Upper lobe of right lung (tissue), 1 donor: ENCODE measurements at regions of chr3 and their contacts with region 1.

Region 1: GRCh38 chr3:52001443-52001974 is 5.8 kb upstream of the RPL29 start:
- DNase-seq: peak; percentile 86
- ATAC-seq: peak; percentile 81
- H3K4me3 ChIP-seq: no peak overlapping the region
- H3K27ac ChIP-seq: no peak overlapping the region
- H3K4me1 ChIP-seq: peaks cover 14% of the 10 kb centered on the region
- H3K27me3 ChIP-seq: no peaks in the 10 kb centered on the region
- CTCF ChIP-seq: peak; percentile 90

Region 2: DNA sequence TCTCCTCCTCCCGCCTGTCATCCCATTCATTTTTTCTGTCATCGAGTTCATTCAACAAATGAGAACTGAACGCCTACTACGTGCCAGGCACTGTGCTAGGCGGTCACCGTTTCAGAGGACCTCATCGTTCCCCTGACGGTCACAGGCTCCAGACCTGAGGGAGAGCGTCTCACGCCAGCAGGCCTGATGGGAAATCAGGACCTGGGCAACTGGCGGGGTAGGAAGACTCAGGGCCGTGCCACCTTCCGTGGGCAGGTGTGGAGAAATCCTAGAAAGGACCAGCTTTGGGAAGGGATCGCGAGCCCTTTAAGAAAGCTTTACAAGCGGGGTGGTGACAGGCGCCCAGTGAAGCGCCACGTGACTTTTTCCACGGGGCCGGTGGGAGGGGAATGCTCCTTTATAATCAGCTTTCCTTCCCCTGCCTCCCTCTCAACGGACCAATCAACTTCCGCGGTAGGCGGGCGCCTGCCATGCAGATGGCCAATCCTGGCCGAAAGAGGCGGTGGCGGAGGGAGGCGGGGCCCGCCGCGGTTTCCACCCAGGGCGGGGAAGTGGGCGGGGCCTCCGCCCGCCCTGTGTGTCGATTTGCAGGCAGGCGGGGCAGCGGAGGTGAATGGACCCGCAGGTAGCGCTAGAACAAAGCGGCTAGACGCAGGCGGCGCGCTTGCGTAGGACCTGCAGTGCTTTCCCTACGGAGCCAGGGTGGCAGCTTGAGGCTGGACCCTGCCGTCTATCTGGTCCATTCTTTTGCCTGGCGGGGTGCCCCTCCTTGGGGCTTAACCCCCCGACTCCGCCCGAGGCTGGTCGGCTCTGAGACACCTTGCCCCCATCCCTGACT is 55.7 kb after region 1 on chr3:
- intact Hi-C with region 1: loop called (anchors 5 kb)
- DNase-seq: peak; percentile 100
- ATAC-seq: peak; percentile 91
- H3K4me3 ChIP-seq: peak overlapping the region; percentile 56
- H3K27ac ChIP-seq: peak overlapping the region; percentile 83
- H3K4me1 ChIP-seq: peaks cover 28% of the 10 kb centered on the region
- H3K27me3 ChIP-seq: no peaks in the 10 kb centered on the region
- CTCF ChIP-seq: no peak

Region 3: GRCh38 chr3:52123106-52123725 is 121.7 kb after region 1 on chr3:
- intact Hi-C with region 1: loop called (anchors 5 kb)
- DNase-seq: peak; percentile 91
- ATAC-seq: peak; percentile 94
- H3K4me3 ChIP-seq: no peak overlapping the region
- H3K27ac ChIP-seq: no peak overlapping the region
- H3K4me1 ChIP-seq: peaks cover 34% of the 10 kb centered on the region
- H3K27me3 ChIP-seq: no peaks in the 10 kb centered on the region
- CTCF ChIP-seq: peak; percentile 96

Region 4: GRCh38 chr3:52144034-52144795 is 142.7 kb after region 1 on chr3:
- intact Hi-C with region 1: loop called (anchors 5 kb)
- DNase-seq: peak; percentile 86
- ATAC-seq: peak; percentile 95
- H3K4me3 ChIP-seq: no peak overlapping the region
- H3K27ac ChIP-seq: no peak overlapping the region
- H3K4me1 ChIP-seq: peaks cover 4% of the 10 kb centered on the region
- H3K27me3 ChIP-seq: no peaks in the 10 kb centered on the region
- CTCF ChIP-seq: peak; percentile 97